AG04449 (cell line): ENCODE measurements at regions of chr17 and their contacts with region 1.

Region 1: DNA sequence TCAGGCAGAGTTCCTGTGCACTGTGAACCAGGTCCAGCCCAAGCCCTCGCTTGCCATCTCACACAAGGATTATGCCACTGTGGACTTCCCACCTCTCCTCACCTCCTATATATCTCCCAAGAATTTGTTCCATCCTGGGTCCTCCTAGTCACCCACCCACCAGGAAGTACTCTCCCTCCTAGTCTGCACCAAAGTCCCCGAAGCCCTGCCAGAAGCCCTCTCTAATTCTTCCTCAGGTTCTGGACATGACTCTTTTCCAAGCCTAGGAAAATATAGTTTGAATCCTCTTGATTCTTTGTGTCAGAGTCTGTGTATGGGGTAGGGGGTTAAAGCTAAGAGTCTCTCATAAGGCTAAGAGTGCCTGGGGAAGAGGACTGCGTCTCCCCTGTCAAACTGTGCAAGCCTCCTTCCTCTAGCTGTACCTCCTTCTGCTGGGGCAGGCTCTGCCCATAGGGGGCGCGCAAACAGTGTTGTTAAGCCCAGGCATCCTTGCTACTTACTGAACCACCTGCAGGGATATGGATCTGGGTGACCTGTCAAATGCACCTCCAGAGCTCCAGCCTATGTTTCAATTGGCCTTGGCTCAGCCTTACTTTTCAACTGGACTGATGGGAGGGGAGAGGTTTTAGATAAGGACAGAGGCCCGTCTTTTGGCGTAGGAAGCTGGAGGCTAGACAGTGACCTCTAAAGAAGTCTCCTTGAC is 16.6 kb upstream of the DLX4 start:
- DNase-seq: no peak
- H3K4me3 ChIP-seq: no peak overlapping the region
- CTCF ChIP-seq: peak; percentile 86

Region 2: DNA sequence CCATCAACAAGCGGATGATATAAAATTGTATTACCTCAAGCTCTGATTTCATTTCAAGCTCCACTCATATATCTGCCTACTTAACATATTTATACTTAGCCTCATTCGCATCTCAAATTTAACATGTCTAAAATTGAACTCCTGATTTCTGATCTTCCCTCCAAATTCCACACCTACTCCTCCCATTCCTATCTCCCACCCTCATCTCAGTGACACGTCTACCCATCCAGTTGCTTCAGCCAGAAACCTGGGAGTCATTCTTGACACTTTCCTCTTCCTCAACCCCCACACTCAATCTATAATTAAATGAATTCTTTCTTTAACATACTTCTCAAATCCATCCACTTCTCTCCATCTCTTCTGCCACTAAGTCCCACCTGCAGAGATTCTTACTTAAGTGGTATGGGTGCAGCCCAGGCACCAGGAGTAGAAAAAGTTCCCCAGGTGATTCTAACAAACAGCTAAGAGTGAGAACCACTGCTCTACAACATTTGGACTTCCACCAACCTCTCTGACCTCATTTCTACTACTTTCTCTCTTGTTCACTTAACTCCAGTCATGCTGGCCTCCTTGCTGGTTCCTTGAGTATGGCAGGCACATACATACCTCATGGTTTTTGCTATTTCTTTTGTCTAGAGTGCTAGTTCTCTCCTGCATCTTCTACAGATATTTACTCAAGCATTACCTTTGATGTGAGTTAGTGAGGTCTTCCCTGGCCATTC is 292.5 kb before region 1 on chr17:
- CTCF ChIA-PET with region 1: no interaction called
- POLR2A ChIA-PET with region 1: no interaction called
- DNase-seq: no peak
- H3K4me3 ChIP-seq: no peak overlapping the region
- CTCF ChIP-seq: no peak

Region 3: GRCh38 chr17:49926886-49927285 is 25.5 kb before region 1 on chr17:
- CTCF ChIA-PET with region 1: interaction called, 11 read pairs
- POLR2A ChIA-PET with region 1: no interaction called
- DNase-seq: no peak
- H3K4me3 ChIP-seq: no peak overlapping the region
- CTCF ChIP-seq: no peak

Region 4: GRCh38 chr17:49935526-49936210 is 16.7 kb before region 1 on chr17:
- CTCF ChIA-PET with region 1: interaction called, 82 read pairs
- POLR2A ChIA-PET with region 1: no interaction called
- DNase-seq: no peak
- H3K4me3 ChIP-seq: no peak overlapping the region
- CTCF ChIP-seq: no peak

Region 5: GRCh38 chr17:49971848-49972485 is 19.6 kb after region 1 on chr17:
- CTCF ChIA-PET with region 1: interaction called, 12 read pairs
- POLR2A ChIA-PET with region 1: no interaction called
- DNase-seq: no peak
- H3K4me3 ChIP-seq: no peak overlapping the region
- CTCF ChIP-seq: no peak

Region 6: DNA sequence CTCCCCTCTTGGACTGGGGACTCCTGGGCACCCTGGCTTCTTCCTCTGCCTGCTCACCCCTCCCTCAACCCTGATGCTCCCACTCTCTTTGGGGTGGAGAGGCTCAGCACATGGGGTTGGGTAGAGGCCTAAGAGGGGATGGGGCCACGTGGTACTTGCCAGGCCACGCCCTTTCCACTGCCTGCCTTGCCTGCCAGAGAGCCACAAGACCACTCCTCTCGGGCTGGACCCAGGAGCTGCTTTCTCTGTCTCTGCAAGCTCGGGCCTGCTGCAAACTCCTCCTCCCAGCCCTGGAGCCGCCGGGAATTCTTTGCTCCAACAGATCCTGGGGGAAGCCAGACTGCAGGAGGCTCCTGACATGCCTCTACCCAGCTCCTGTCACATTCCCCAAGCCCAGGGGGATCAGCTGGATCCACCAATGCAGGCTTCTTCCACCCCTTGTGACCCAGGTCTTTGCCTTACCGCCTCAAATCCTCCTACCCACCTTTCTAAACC is 28.4 kb after region 1 on chr17:
- CTCF ChIA-PET with region 1: interaction called, 19 read pairs
- POLR2A ChIA-PET with region 1: no interaction called
- DNase-seq: no peak
- H3K4me3 ChIP-seq: no peak overlapping the region
- CTCF ChIP-seq: no peak

Region 7: DNA sequence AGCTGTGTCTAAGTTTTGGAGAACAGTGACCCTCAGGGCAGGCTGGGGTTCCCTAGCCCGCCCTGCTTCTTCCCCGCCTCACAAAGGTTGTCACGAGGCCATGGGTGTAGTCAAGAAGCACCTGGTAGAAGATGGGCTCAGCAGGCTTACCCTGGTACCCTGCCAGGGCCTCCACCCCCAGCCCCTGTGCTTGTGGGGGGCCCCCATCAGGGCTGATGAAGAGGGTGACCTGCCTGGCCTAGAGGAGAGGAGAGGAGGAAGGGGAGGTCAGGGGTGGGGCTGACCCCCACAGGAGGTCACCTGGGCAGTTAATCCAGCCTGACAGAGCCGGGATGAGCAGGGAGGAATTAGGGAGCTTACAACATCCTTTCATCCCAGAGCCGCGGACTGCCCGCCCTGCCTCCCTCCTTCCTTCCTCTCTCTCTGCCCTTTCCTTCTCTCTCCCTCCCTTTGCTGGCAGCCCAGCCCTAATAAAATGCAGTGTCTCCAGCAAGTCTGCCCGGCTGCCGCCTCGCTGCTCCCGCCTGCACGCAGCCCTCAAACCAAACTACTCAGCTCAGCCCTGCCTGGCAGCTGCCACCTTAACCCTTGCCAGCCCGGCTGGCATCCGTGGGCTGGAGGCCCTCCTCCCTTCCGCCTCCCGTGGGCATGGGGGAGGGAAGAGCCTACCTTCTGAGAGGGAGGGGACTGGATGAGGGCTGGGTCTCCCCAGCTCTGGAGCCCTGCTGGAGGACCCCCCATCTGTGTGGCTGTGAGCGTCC is 35.5 kb after region 1 on chr17:
- CTCF ChIA-PET with region 1: interaction called, 11 read pairs
- POLR2A ChIA-PET with region 1: no interaction called
- DNase-seq: no peak
- H3K4me3 ChIP-seq: no peak overlapping the region
- CTCF ChIP-seq: no peak